ENCODE measurements at regions of chr18 and their contacts with region 1.

Region 1: GRCh38 chr18:21831413-21831831 is 90.8 kb downstream of the MIB1 start:
- DNase-seq: peak in 4 of 5 donors; percentile 35 to 65 (median 56)
- ATAC-seq: peak; percentile 55 to 86 (median 76)
- H3K4me3 ChIP-seq: peak overlapping the region in 11 of 12 donors; percentile 34 to 62 (median 51)
- H3K27ac ChIP-seq: peak overlapping the region; percentile 61 to 83 (median 78)
- H3K4me1 ChIP-seq: peaks cover 0 to 18% (median under 1%) of the 10 kb centered on the region in 12 donors
- H3K27me3 ChIP-seq: no peaks in the 10 kb centered on the region
- CTCF ChIP-seq: no peak
- POLR2A ChIP-seq: peak in 1 of 2 donors; percentile 38

Region 2: GRCh38 chr18:21704603-21705364 is 126.6 kb before region 1 on chr18 and contains the start of gene ABHD3:
- intact Hi-C with region 1: loop called in 1 of 10 experiments (anchors 5 kb)
- DNase-seq: peak; percentile 94 to 97 (median 95)
- ATAC-seq: peak; percentile 99 to 100 (median 100)
- H3K4me3 ChIP-seq: peak within 1 kb of the TSS; percentile 46 to 99 (median 88)
- H3K27ac ChIP-seq: peak within 1 kb of the TSS; percentile 45 to 97 (median 92)
- H3K4me1 ChIP-seq: peaks cover 0 to 21% (median 7%) of the 10 kb centered on the region in 12 donors
- H3K27me3 ChIP-seq: no peaks in the 10 kb centered on the region
- CTCF ChIP-seq: peak in 11 of 12 donors; percentile 17 to 63 (median 48)
- POLR2A ChIP-seq: peak; percentile 70 to 97
- total RNA-seq, gene ABHD3: 2.1 to 15.6 (median 3.8) TPM

Region 3: DNA sequence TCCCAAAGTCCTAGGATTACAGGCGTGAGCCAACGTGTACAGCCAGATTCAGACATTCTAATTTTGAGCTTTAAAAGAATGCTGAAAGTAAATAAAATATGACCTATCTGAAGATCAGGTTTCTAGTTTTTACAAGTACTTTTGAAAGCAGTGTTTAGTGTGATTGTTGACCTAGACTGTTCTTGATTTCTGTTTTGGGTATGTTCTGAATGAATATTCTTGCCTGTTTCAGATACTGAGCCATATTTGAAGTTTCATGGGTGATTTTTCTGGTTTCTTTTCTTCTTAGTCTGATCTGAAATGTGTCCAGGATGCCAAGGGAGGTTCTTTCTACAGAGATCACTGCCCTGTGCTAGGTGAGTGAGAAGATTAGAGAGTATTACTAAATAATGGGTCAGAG is 53.6 kb before region 1 on chr18:
- intact Hi-C with region 1: no loop called
- DNase-seq: no peak
- ATAC-seq: no peak
- H3K4me3 ChIP-seq: no peak overlapping the region
- H3K27ac ChIP-seq: no peak overlapping the region
- H3K4me1 ChIP-seq: no peaks in the 10 kb centered on the region
- H3K27me3 ChIP-seq: no peaks in the 10 kb centered on the region
- CTCF ChIP-seq: no peak
- POLR2A ChIP-seq: no peak